ENCODE measurements at regions of chr22 and their contacts with region 1.

Region 1: DNA sequence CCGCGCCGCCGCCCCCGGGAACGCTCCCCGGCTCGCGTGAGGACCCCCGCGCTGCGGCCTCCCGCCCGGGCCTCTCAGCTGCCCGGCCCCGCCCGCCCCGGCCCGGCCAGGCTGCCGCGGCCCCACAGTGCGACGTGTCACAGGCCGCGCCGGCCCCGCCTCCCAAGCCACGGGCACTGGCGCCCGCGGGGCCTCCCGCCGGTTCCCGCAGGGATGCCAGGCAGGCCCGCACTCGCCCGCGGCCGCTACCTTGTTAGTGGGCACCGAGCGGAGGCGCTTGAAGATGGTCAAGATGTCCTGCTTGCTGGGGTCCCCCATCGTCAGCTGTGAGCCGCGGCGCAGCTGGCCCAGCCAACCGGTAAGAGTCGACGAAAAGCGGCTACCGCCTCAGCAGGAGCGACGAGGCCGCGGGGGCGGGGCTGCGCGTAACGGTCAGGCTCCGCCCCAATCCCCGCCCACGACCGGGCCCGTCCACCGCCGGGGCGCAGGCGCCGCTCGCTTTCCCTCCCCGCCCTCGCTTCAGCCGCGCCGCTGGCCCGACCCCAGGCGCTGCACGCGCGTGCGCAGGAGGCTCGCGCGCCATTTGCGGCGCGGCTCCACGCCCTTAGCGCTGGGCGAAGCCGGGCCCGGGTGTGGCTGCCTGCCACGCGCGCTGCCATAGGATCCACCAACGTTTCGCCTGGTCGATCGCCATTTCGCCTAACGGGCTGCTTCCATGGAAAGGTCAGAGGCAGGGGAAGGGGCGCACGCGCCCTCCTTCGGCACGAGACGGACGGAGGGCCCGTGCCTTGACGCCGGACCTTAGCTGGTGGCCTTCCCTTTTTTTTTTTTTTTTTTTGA is at the start of gene ARFGAP3:
- DNase-seq: peak; percentile 94
- H3K4me3 Mint-ChIP-seq: peak within 1 kb of the TSS; percentile 81
- H3K27ac Mint-ChIP-seq: peak within 1 kb of the TSS; percentile 66
- H3K4me1 Mint-ChIP-seq: peaks cover 6% of the 10 kb centered on the region
- H3K27me3 Mint-ChIP-seq: no peaks in the 10 kb centered on the region
- total RNA-seq, gene ARFGAP3: 25.6 to 28.6 TPM

Region 2: DNA sequence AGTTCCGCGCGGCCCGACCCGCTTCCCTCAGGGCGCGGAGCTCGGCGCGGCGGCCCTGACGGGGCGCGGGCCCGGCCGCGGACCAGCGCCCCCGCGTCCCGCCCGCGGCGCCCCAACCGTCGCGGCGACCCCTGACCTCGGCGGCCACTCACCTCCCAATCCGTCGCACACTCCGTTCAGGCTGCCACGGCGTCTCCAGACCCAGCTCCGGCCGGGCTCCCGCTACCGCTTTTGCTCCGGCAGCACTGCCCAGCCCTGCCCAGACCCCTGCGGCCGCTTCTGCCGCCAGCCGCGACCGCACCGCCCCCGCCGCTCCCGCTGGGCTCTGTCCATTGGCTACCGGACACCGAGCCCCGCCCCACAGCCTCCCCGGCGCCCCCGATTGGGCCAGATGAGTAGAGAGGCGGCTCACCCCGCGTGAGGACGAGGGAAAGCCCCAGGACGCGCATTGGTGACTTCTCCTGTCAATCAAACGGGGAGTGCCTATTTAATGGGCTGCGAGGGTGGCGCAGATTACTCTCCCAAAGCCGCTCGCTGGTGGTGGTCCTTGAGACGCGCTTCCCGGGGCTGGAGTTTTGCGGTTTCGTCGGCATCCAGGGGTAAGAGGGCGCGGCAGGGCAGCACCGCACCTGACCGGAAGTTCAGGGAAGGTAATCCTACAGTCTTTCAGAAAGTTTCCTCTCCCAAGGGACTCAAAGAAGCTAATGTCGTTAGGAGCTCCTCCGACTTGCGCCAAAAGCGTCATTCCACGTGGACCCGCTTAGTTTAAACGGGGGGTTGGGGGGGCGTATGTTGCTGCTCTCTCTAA is 158.0 kb after region 1 on chr22 and contains the start of gene PACSIN2:
- CTCF ChIA-PET with region 1: no interaction called
- intact Hi-C with region 1: loop called (anchors 2 kb)
- DNase-seq: peak; percentile 100
- H3K4me3 Mint-ChIP-seq: peak within 1 kb of the TSS; percentile 94
- H3K27ac Mint-ChIP-seq: peak within 1 kb of the TSS; percentile 71
- H3K4me1 Mint-ChIP-seq: peaks cover 21% of the 10 kb centered on the region
- H3K27me3 Mint-ChIP-seq: no peaks in the 10 kb centered on the region
- total RNA-seq, gene PACSIN2: 31.2 to 32.9 TPM